Panc1 (cell line): ENCODE measurements at regions of chr1 and their contacts with region 1.

Region 1: DNA sequence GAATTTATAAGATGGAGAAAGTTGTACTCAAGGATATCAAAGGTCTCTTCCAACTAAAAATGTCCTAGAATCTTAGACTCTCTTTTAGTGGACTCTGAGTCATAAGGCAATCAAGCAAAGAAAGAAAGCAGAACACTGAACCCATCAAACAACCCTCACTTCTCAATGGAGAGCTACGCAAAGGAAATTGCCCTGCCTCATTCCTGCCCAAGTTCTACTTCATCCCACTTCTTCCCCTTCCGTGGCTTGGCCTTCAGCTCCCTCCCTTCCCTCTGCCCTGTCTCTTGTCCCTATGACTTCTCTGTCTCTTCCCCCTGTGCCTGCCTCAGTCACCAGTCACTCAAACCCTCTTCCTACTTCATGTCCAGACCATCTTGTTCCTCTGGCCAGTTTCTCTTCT is 58.5 kb downstream of the RIMS3 start:
- DNase-seq: no peak
- ATAC-seq: no peak
- H3K4me3 ChIP-seq: no peak overlapping the region
- H3K27ac ChIP-seq: no peak overlapping the region
- H3K4me1 ChIP-seq: no peaks in the 10 kb centered on the region
- H3K27me3 ChIP-seq: no peaks in the 10 kb centered on the region
- CTCF ChIP-seq: no peak

Region 2: GRCh38 chr1:40241362-40241761 is 365.6 kb before region 1 on chr1:
- CTCF ChIA-PET with region 1: interaction called, 12 read pairs
- POLR2A ChIA-PET with region 1: no interaction called
- in situ Hi-C with region 1: no loop called
- intact Hi-C with region 1: no loop called
- DNase-seq: no peak
- ATAC-seq: no peak
- H3K4me3 ChIP-seq: no peak overlapping the region
- H3K27ac ChIP-seq: no peak overlapping the region
- H3K4me1 ChIP-seq: no peaks in the 10 kb centered on the region
- H3K27me3 ChIP-seq: no peaks in the 10 kb centered on the region
- CTCF ChIP-seq: no peak

Region 3: GRCh38 chr1:40630488-40631381 is 23.8 kb after region 1 on chr1:
- CTCF ChIA-PET with region 1: no interaction called
- POLR2A ChIA-PET with region 1: no interaction called
- in situ Hi-C with region 1: no loop called
- intact Hi-C with region 1: no loop called
- DNase-seq: no peak
- ATAC-seq: peak; percentile 82
- H3K4me3 ChIP-seq: no peak overlapping the region
- H3K27ac ChIP-seq: no peak overlapping the region
- H3K4me1 ChIP-seq: no peaks in the 10 kb centered on the region
- H3K27me3 ChIP-seq: no peaks in the 10 kb centered on the region
- CTCF ChIP-seq: peak; percentile 72; the same call in 1 of the 2 replicates

Region 4: GRCh38 chr1:40951943-40952743 is 345.2 kb after region 1 on chr1:
- CTCF ChIA-PET with region 1: no interaction called
- POLR2A ChIA-PET with region 1: no interaction called
- in situ Hi-C with region 1: no loop called
- intact Hi-C with region 1: no loop called
- DNase-seq: peak; percentile 66
- ATAC-seq: peak; percentile 80
- H3K4me3 ChIP-seq: no peak overlapping the region
- H3K27ac ChIP-seq: peak overlapping the region; percentile 78
- H3K4me1 ChIP-seq: peaks cover 28% of the 10 kb centered on the region
- H3K27me3 ChIP-seq: no peaks in the 10 kb centered on the region
- CTCF ChIP-seq: peak; percentile 97